ENCODE measurements at regions of chr7 and their contacts with region 1.

Region 1: GRCh38 chr7:5494683-5495561 is 71.3 kb upstream of the TNRC18 start:
- DNase-seq: peak; percentile 70 to 93 (median 84)

Region 2: DNA sequence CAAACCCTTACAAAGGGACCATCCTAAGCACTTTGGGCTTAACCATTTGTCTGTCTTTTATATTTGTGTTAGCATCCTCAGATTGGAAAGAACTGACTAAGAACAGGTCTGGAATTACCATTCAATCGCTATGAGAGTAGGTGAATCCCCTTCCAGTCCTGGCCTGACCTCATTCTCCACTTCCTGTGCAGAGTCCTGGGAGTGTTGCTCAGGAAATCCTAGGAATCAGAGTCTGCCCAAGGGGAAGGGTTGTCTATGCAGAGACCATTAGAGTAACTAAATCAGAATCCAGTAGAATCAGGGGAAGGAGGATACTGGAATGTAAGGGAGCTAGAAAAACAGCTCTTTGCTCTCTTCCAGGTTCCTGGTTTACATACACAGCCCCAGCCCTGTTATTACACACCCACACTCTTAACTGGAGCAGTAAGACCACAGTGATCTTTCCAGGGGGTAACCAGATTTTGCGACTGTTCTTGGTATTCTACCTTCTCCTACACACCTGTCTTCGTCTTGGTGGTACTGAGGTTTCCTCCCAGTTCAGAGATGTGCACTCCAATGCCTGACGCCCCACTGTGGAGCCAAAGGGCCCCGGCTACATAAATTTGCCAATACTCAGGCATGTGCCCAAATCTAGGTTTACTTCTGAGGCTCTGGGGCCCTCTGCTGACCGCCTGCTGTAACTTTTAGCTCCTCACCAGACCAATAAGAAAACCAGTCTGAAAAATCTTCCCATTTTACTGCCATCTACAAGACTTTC is 182.8 kb after region 1 on chr7:
- intact Hi-C with region 1: loop called (anchors 5 kb)
- DNase-seq: peak in 41 of 42 donors; percentile 58 to 90 (median 76)

Region 3: DNA sequence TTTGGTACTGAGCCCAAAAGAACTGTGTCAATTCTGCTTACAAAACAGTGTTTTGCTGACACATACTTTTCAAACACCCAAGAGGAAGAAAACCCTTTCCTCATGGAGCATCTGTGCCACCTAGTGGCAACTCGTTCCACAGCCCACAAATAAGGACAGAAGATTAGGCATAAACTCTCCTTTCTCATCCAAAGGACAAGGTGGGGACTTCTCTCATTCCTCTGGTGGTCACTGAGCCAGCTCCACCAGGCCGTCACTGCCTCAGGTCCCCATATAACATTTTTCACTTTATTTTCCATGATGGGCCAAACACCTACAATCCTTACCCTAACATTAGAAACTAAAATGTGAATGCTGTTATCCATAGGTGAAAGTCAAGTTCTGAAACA is 209.6 kb after region 1 on chr7:
- intact Hi-C with region 1: loop called (anchors 5 kb)
- DNase-seq: peak; percentile 55 to 95 (median 86)

Measured in head of caudate nucleus (tissue), 42 donors.